GM13976 (cell line): ENCODE measurements at regions of chr6 and their contacts with region 1.

Region 1: GRCh38 chr6:33014841-33015634 is 5.6 kb upstream of the HLA-DOA start:
- DNase-seq: peak; percentile 78
- CTCF ChIP-seq: peak; percentile 76

Region 2: GRCh38 chr6:33082702-33083101 is 67.7 kb after region 1 on chr6:
- in situ Hi-C with region 1: loop called (anchors 5 kb)
- DNase-seq: no peak
- CTCF ChIP-seq: peak; percentile 38

Region 3: GRCh38 chr6:33248925-33249731 is 234.1 kb after region 1 on chr6:
- in situ Hi-C with region 1: loop called (anchors 25 kb)
- DNase-seq: peak; percentile 93
- CTCF ChIP-seq: peak; percentile 2

Region 4: GRCh38 chr6:33264015-33264414 is 249.0 kb after region 1 on chr6:
- in situ Hi-C with region 1: no loop called
- DNase-seq: no peak
- CTCF ChIP-seq: no peak